ENCODE measurements at regions of chr6 and their contacts with region 1.

Region 1: GRCh38 chr6:11496152-11497060 is 41.1 kb upstream of the TMEM170B start:
- DNase-seq: peak; percentile 92
- H3K4me3 ChIP-seq: no peak overlapping the region
- H3K27ac ChIP-seq: peak overlapping the region; percentile 42
- H3K4me1 ChIP-seq: peaks cover 5% of the 10 kb centered on the region
- H3K27me3 ChIP-seq: no peaks in the 10 kb centered on the region
- CTCF ChIP-seq: peak; percentile 67 to 71
- POLR2A ChIP-seq: no peak

Region 2: GRCh38 chr6:10954590-10955010 is 541.8 kb before region 1 on chr6:
- CTCF ChIA-PET with region 1: interaction called, 58 read pairs
- POLR2A ChIA-PET with region 1: no interaction called
- dilution Hi-C with region 1: no loop called
- intact Hi-C with region 1: loop called (anchors 1 kb)
- DNase-seq: peak; percentile 73
- H3K4me3 ChIP-seq: no peak overlapping the region
- H3K27ac ChIP-seq: no peak overlapping the region
- H3K4me1 ChIP-seq: no peaks in the 10 kb centered on the region
- H3K27me3 ChIP-seq: peaks cover 0 to 2% of the 10 kb centered on the region in 2 experiments
- CTCF ChIP-seq: peak; percentile 91 to 96
- POLR2A ChIP-seq: no peak

Region 3: GRCh38 chr6:11144393-11144851 is 352.0 kb before region 1 on chr6:
- CTCF ChIA-PET with region 1: interaction called, 136 read pairs
- POLR2A ChIA-PET with region 1: no interaction called
- dilution Hi-C with region 1: loop called (anchors 25 kb)
- intact Hi-C with region 1: loop called (anchors 1 kb)
- DNase-seq: peak; percentile 70
- H3K4me3 ChIP-seq: no peak overlapping the region
- H3K27ac ChIP-seq: no peak overlapping the region
- H3K4me1 ChIP-seq: no peaks in the 10 kb centered on the region
- H3K27me3 ChIP-seq: no peaks in the 10 kb centered on the region
- CTCF ChIP-seq: peak; percentile 86 to 95
- POLR2A ChIP-seq: no peak

Region 4: GRCh38 chr6:11194356-11195218 is 301.8 kb before region 1 on chr6:
- CTCF ChIA-PET with region 1: interaction called, 7 read pairs
- POLR2A ChIA-PET with region 1: no interaction called
- dilution Hi-C with region 1: no loop called
- intact Hi-C with region 1: loop called (anchors 1 kb)
- DNase-seq: peak; percentile 91
- H3K4me3 ChIP-seq: peak overlapping the region in 1 of 3 experiments; percentile 9
- H3K27ac ChIP-seq: peak overlapping the region; percentile 98
- H3K4me1 ChIP-seq: peaks cover 37% of the 10 kb centered on the region
- H3K27me3 ChIP-seq: no peaks in the 10 kb centered on the region
- CTCF ChIP-seq: peak in 1 of 2 donors; percentile 9
- POLR2A ChIP-seq: peak; percentile 38

Region 5: DNA sequence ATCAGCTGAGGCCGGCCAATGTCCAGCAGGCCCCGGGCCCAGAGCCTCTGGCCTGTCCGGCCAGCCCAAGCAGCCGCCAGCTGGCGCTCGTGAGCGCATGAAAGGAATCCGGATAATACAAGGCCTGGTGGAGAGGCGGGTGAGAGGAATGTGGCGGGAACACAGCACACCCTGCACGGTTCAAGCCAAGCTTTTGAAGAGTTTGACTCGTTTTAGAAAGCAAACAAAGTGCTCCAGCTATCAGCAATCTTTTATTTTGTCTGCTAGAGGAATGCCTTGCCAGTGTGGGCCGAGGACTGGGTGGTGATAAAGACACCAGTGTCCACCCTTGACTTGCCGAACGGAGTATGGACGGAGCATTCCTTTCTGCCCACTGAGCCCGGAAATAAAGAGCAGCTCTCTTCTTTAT is 254.6 kb before region 1 on chr6:
- CTCF ChIA-PET with region 1: interaction called, 50 read pairs
- POLR2A ChIA-PET with region 1: no interaction called
- dilution Hi-C with region 1: no loop called
- intact Hi-C with region 1: loop called (anchors 1 kb)
- DNase-seq: peak; percentile 41
- H3K4me3 ChIP-seq: no peak overlapping the region
- H3K27ac ChIP-seq: no peak overlapping the region
- H3K4me1 ChIP-seq: no peaks in the 10 kb centered on the region
- H3K27me3 ChIP-seq: no peaks in the 10 kb centered on the region
- CTCF ChIP-seq: peak; percentile 85 to 91
- POLR2A ChIP-seq: no peak

Region 6: DNA sequence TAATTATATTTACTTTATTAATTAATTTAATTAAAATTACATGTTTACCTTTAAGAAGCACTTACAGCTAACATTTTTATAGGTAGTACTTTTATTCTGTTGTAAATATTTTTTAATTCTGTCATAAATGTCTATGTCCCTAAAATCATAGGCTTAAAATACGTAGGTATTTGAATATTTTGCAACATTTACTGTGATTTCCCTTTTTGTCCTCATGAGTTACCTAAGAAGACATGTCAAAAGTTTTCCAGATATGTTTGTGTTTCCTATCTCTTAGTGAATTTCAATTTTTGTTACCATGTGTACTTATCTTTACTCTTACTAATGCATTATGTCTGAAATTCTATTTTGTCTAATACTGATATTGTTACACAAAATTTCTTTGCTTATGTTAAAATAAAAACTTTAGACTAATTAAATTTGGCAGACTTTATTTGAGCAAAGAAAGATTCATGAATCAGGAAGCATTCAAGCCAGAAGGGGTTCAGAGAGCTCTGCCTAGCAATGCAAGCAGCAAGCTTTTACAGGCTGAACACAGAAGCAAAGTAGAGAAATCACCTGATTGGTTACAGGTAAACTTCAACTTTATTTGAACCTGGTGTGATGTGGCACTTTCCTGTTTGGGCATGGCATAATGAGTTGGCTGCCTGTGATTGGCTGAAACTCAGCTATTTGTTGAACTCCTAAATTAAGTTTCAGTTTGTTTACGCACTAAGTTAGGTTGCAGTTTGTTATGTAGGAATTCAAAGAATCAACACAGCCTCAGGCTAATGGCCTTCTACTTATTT is 82.0 kb before region 1 on chr6:
- CTCF ChIA-PET with region 1: interaction called, 3 read pairs
- POLR2A ChIA-PET with region 1: no interaction called
- dilution Hi-C with region 1: no loop called
- intact Hi-C with region 1: loop called (anchors 1 kb)
- DNase-seq: peak; percentile 43
- H3K4me3 ChIP-seq: no peak overlapping the region
- H3K27ac ChIP-seq: no peak overlapping the region
- H3K4me1 ChIP-seq: peaks cover 35% of the 10 kb centered on the region
- H3K27me3 ChIP-seq: no peaks in the 10 kb centered on the region
- CTCF ChIP-seq: no peak
- POLR2A ChIP-seq: no peak

Measured in endothelial cell of umbilical vein (primary cell).